ENCODE measurements at regions of chr19 and their contacts with region 1.

Region 1: GRCh38 chr19:11435058-11435832 is at the starts of genes ODAD3 and PRKCSH:
- DNase-seq: peak; percentile 99
- ATAC-seq: peak; percentile 96
- H3K4me3 Mint-ChIP-seq: peak within 1 kb of the TSS; percentile 98
- H3K27ac Mint-ChIP-seq: peak within 1 kb of the TSS; percentile 99
- H3K4me1 Mint-ChIP-seq: peaks cover 14% of the 10 kb centered on the region
- H3K27me3 Mint-ChIP-seq: no peaks in the 10 kb centered on the region
- total RNA-seq, gene ODAD3: 0.16 to 0.25 TPM
- total RNA-seq, gene PRKCSH: 225 to 269 TPM

Region 2: GRCh38 chr19:10870955-10871603 is 564.2 kb before region 1 on chr19 and contains the start of gene CARM1:
- CTCF ChIA-PET with region 1: no interaction called
- POLR2A ChIA-PET with region 1: no interaction called
- intact Hi-C with region 1: loop called in 1 of 2 experiments (anchors 1 kb)
- DNase-seq: peak; percentile 100
- ATAC-seq: peak; percentile 88
- H3K4me3 Mint-ChIP-seq: peak within 1 kb of the TSS; percentile 80
- H3K27ac Mint-ChIP-seq: peak within 1 kb of the TSS; percentile 97
- H3K4me1 Mint-ChIP-seq: peaks cover 28% of the 10 kb centered on the region
- H3K27me3 Mint-ChIP-seq: no peaks in the 10 kb centered on the region
- total RNA-seq, gene CARM1: 82.3 to 96.8 TPM

Region 3: DNA sequence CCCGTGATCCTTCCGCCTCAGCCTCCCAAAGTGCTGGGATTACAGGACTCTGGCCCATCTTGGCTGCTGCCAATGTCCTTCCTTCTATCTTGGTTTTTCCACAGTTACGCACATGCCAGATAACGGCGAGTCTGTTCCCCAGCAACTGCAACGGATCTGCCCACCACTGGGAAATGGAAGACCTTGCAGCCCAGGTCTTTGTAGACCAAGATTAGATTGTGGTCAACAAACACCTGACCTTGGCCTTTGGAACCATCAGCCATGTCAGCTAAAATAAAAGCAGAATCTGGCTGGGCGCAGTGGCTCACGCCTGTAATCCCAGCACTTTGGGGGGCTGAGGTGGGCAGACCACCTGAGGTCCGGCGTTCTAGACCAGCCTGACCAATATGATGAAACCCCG is 356.4 kb before region 1 on chr19:
- CTCF ChIA-PET with region 1: no interaction called
- POLR2A ChIA-PET with region 1: no interaction called
- intact Hi-C with region 1: no loop called
- DNase-seq: no peak
- ATAC-seq: no peak
- H3K4me3 Mint-ChIP-seq: no peak overlapping the region
- H3K27ac Mint-ChIP-seq: no peak overlapping the region
- H3K4me1 Mint-ChIP-seq: peaks cover 10% of the 10 kb centered on the region
- H3K27me3 Mint-ChIP-seq: no peaks in the 10 kb centered on the region

Region 4: DNA sequence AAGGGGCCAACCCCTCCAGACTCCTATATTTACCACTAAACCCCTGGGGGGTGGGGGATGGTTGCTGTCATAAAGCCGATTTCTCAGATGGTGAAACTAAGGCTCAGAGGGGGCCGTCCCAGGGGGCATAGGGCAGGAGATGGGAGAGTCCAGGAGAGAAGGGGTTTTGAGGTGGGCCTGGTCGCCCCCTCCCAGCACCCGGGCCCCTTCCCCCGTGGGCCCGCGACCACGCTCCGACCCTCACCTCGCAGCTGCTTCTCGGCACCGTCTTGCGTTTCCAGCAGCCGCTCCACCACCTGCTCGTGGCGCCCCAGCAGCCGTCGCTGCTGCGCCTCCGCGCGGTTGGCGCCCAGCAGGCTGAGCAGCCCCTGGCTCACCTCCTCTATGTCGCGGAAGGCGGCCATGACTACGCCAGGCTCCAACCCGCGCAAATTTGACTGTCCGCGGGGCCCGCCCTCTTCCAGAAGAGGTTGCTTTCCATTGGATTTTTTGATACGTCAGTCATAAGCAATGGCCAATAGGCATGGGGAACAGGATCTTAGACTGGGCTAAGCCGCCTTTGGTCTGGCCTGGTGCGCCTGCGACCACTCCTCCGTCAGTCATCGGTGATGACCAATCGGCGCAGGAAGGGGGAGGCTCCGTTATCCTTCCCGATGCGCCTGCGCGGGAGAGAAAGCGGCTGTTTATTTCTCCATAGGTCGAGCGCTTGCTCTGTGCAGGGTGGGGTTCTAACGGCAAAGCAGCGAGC is 279.7 kb before region 1 on chr19 and contains the start of gene SPC24:
- CTCF ChIA-PET with region 1: interaction called, 3 read pairs
- POLR2A ChIA-PET with region 1: no interaction called
- intact Hi-C with region 1: loop called in 1 of 2 experiments (anchors 1 kb)
- DNase-seq: peak; percentile 97
- ATAC-seq: peak; percentile 99
- H3K4me3 Mint-ChIP-seq: peak within 1 kb of the TSS; percentile 79
- H3K27ac Mint-ChIP-seq: peak within 1 kb of the TSS; percentile 80
- H3K4me1 Mint-ChIP-seq: peaks cover 12% of the 10 kb centered on the region
- H3K27me3 Mint-ChIP-seq: no peaks in the 10 kb centered on the region
- total RNA-seq, gene SPC24: 59.6 to 72.2 TPM

Region 5: DNA sequence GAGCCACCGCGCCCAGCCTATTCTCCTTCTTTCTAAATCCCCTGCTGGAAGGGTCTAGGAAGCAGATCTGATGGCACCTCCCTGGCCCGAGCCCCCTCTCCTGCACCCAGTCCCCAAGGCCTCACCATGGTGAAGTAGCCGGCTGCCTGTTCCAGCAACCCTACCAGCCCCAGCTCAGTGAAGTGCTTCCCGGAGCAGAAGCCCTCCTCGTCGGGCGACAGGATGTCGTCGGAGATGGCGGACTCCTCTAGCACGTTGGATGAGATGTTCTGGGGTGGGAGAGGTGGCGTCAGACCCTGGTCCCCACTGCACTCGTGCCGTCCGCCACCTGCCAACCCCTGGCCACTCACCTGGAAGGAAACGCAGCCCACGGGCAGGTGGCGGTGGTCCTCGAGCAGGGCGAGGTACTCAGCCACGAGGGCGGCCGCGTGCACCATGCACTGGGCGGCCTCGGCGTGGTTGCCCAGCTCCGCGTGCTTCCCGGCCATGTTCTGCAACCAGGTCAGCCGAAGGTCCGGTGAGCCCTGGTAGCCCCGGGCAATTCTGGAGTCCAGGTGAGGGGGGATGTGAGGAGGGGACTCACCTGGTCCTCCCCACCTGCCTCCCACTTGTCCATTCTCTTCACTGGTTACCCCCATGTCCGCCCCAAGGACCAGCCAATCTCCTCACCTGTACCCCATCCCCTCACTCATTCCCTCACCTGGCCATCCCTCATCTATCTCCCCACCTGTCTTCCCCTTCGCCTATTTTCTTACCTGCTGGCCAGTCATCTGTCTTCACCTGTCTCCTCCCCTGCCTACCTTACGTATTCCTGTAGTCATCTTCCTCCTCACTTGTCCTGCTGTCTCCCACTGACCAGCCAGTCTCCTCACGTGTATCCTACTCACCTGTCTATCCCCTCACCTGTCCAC is 226.4 kb before region 1 on chr19:
- CTCF ChIA-PET with region 1: no interaction called
- POLR2A ChIA-PET with region 1: no interaction called
- intact Hi-C with region 1: no loop called
- DNase-seq: no peak
- ATAC-seq: no peak
- H3K4me3 Mint-ChIP-seq: no peak overlapping the region
- H3K27ac Mint-ChIP-seq: no peak overlapping the region
- H3K4me1 Mint-ChIP-seq: no peaks in the 10 kb centered on the region
- H3K27me3 Mint-ChIP-seq: no peaks in the 10 kb centered on the region

Region 6: DNA sequence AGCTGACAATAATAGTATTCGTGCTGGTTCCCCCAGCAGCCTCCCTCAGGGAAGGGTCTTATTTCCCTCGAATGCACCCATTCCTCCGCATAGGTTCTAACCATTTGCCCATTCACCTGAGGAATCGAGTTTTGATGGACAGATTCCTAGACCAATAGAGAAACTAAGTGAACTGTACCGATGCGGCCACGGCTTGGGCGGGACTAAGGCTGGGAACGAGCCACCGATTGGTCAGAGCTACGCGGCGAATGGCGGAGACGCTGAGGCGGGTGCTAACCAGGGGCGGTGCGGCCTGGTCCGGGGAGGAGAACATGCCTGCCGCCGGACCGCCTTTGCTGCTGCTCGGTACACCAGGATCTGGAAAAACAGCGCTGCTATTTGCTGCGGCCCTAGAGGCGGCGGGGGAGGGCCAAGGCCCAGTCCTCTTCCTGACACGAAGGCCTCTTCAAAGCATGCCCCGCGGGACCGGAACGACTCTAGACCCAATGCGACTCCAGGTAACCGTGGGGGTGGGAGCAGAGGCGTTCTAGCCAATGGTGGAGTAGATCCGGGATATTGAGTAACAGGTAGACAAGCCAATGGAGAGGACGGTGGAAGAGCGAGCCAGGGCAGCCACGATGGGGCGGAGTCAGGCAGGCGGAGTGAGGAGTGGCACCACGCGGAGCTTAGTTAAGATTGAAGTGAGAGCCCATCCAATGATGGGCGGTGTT is 60.7 kb before region 1 on chr19 and contains the start of gene SWSAP1:
- CTCF ChIA-PET with region 1: interaction called, 16 read pairs
- POLR2A ChIA-PET with region 1: interaction called, 4 read pairs
- intact Hi-C with region 1: loop called (anchors 1 kb)
- DNase-seq: peak; percentile 98
- ATAC-seq: peak; percentile 92
- H3K4me3 Mint-ChIP-seq: no peak within 1 kb of the TSS
- H3K27ac Mint-ChIP-seq: no peak within 1 kb of the TSS
- H3K4me1 Mint-ChIP-seq: peaks cover 28% of the 10 kb centered on the region
- H3K27me3 Mint-ChIP-seq: no peaks in the 10 kb centered on the region
- total RNA-seq, gene SWSAP1: 1.5 to 1.7 TPM

Region 7: GRCh38 chr19:11482384-11483050 is 47.3 kb after region 1 on chr19:
- CTCF ChIA-PET with region 1: no interaction called
- POLR2A ChIA-PET with region 1: no interaction called
- intact Hi-C with region 1: loop called (anchors 1 kb)
- DNase-seq: peak; percentile 93
- ATAC-seq: peak; percentile 64
- H3K4me3 Mint-ChIP-seq: peak overlapping the region; percentile 66
- H3K27ac Mint-ChIP-seq: peak overlapping the region; percentile 78
- H3K4me1 Mint-ChIP-seq: peaks cover 17% of the 10 kb centered on the region
- H3K27me3 Mint-ChIP-seq: peaks cover 20% of the 10 kb centered on the region

Region 8: DNA sequence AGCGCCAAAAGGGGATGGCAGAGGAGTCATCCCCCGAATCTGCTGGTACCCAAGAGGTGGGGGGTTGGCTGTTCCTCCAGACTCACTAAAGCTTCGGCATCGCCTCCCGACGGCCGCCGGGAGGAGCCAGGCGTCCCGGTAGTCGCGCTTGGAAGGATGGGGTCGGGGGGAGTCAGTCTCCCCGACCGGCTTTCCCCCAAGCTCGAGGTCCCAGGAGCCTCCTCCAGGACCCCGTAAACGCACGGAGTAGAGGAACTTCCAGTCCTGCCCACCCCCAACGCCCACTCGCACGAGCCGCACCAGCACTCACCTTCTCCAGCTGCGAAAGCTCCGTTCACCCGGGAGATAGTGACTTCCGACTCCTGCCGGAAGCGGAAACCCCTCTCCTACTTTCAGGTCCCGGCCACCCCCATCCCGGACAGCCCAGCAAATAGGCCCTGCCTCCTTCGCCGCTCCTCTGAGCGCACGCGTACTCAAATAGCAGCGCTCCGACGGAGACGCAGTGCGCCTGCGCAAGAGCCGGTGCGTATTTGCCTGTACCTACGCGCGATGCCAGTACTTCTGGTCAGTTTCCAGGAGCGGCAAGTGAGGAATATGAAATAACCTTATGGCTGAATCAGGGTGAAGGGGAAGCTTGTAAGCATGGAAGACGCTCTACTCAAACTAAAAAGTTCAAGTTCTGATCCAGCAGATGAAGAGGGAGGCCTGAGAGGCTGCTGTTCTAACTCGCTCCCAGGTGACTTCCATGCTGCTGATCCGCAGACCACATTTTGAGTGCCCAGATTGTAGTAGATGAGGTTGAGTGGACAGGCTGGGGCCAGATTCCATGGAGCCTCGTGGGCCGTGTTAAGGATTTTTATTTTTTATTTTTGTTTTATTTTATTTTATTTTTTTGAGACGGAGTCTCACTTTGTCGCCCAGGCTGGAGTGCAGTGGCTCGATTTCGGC is 123.9 kb after region 1 on chr19 and contains the start of gene ELOF1:
- CTCF ChIA-PET with region 1: no interaction called
- POLR2A ChIA-PET with region 1: no interaction called
- intact Hi-C with region 1: loop called in 1 of 2 experiments (anchors 1 kb)
- DNase-seq: peak; percentile 99
- ATAC-seq: peak; percentile 93
- H3K4me3 Mint-ChIP-seq: peak within 1 kb of the TSS; percentile 90
- H3K27ac Mint-ChIP-seq: peak within 1 kb of the TSS; percentile 94
- H3K4me1 Mint-ChIP-seq: peaks cover 44% of the 10 kb centered on the region
- H3K27me3 Mint-ChIP-seq: no peaks in the 10 kb centered on the region
- total RNA-seq, gene ELOF1: 48.0 to 53.7 TPM

Region 9: GRCh38 chr19:11798391-11799330 is 363.4 kb after region 1 on chr19 and contains the start of gene ZNF491:
- CTCF ChIA-PET with region 1: no interaction called
- POLR2A ChIA-PET with region 1: no interaction called
- intact Hi-C with region 1: loop called in 1 of 2 experiments (anchors 1 kb)
- DNase-seq: peak; percentile 95
- ATAC-seq: peak; percentile 99
- H3K4me3 Mint-ChIP-seq: peak within 1 kb of the TSS; percentile 73
- H3K27ac Mint-ChIP-seq: peak within 1 kb of the TSS; percentile 13
- H3K4me1 Mint-ChIP-seq: peaks cover 12% of the 10 kb centered on the region
- H3K27me3 Mint-ChIP-seq: no peaks in the 10 kb centered on the region
- total RNA-seq, gene ZNF491: 0.60 to 1.2 TPM